ENCODE measurements at regions of chr3 and their contacts with region 1.

Region 1: GRCh38 chr3:39378088-39378487 is 5.1 kb upstream of the SLC25A38 start:
- DNase-seq: peak; percentile 28 to 82 (median 50)
- ATAC-seq: peak; percentile 85
- H3K4me3 ChIP-seq: no peak overlapping the region
- H3K4me3 Mint-ChIP-seq: peak overlapping the region; percentile 26
- H3K27ac ChIP-seq: no peak overlapping the region
- H3K27ac Mint-ChIP-seq: no peak overlapping the region
- H3K4me1 ChIP-seq: peaks cover 13% of the 10 kb centered on the region
- H3K4me1 Mint-ChIP-seq: peaks cover 15% of the 10 kb centered on the region
- H3K27me3 ChIP-seq: no peaks in the 10 kb centered on the region
- H3K27me3 Mint-ChIP-seq: no peaks in the 10 kb centered on the region
- CTCF ChIP-seq: peak; percentile 82

Region 2: DNA sequence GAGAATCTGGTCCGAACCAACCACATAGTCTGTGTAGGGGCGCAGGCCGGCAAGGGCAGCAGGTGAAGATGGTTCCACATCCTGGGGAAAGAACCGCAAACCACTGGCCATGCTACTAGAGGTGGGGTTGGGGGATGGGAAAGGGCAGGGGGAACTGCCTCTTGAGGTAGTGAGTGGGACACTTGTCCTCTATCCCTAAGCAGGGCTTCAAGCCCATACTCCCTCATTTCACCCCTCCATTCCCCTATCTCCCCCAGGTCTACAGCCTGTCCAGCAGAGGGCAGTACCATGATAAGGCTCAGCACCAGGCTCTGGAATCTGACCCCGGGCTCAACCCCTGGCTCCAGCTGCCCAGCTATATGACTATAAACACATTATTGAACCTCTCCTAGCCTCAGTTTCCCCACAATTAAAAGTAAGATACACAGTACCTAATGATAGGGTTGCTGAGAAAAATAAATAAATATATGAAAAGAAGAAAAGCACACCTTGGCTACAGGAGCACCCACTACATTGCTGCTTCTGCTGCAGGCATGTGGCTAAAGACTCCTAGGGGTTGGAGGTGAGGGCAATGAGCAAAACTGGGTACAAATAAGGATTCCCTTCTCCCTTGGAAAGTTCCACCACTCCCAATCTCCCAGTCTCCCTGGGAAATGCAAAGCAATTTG is 276.9 kb before region 1 on chr3:
- CTCF ChIA-PET with region 1: interaction called, 4 read pairs
- POLR2A ChIA-PET with region 1: interaction called, 3 read pairs
- intact Hi-C with region 1: loop called (anchors 5 kb)
- DNase-seq: peak in 11 of 14 experiments; percentile 17 to 78 (median 37)
- ATAC-seq: peak; percentile 66
- H3K4me3 ChIP-seq: no peak overlapping the region
- H3K4me3 Mint-ChIP-seq: no peak overlapping the region
- H3K27ac ChIP-seq: no peak overlapping the region
- H3K27ac Mint-ChIP-seq: peak overlapping the region; percentile 19
- H3K4me1 ChIP-seq: peaks cover 39% of the 10 kb centered on the region
- H3K4me1 Mint-ChIP-seq: peaks cover 42% of the 10 kb centered on the region
- H3K27me3 ChIP-seq: no peaks in the 10 kb centered on the region
- H3K27me3 Mint-ChIP-seq: no peaks in the 10 kb centered on the region
- CTCF ChIP-seq: peak; percentile 69

Region 3: GRCh38 chr3:39189959-39190269 is 188.2 kb before region 1 on chr3:
- CTCF ChIA-PET with region 1: interaction called, 3 read pairs
- POLR2A ChIA-PET with region 1: no interaction called
- intact Hi-C with region 1: loop called (anchors 2 to 5 kb)
- DNase-seq: peak in 13 of 14 experiments; percentile 21 to 81 (median 39)
- ATAC-seq: peak; percentile 82
- H3K4me3 ChIP-seq: no peak overlapping the region
- H3K4me3 Mint-ChIP-seq: no peak overlapping the region
- H3K27ac ChIP-seq: no peak overlapping the region
- H3K27ac Mint-ChIP-seq: no peak overlapping the region
- H3K4me1 ChIP-seq: peaks cover 6% of the 10 kb centered on the region
- H3K4me1 Mint-ChIP-seq: no peaks in the 10 kb centered on the region
- H3K27me3 ChIP-seq: no peaks in the 10 kb centered on the region
- H3K27me3 Mint-ChIP-seq: no peaks in the 10 kb centered on the region
- CTCF ChIP-seq: peak; percentile 78